ENCODE measurements at regions of chr12 and their contacts with region 1.

Region 1: DNA sequence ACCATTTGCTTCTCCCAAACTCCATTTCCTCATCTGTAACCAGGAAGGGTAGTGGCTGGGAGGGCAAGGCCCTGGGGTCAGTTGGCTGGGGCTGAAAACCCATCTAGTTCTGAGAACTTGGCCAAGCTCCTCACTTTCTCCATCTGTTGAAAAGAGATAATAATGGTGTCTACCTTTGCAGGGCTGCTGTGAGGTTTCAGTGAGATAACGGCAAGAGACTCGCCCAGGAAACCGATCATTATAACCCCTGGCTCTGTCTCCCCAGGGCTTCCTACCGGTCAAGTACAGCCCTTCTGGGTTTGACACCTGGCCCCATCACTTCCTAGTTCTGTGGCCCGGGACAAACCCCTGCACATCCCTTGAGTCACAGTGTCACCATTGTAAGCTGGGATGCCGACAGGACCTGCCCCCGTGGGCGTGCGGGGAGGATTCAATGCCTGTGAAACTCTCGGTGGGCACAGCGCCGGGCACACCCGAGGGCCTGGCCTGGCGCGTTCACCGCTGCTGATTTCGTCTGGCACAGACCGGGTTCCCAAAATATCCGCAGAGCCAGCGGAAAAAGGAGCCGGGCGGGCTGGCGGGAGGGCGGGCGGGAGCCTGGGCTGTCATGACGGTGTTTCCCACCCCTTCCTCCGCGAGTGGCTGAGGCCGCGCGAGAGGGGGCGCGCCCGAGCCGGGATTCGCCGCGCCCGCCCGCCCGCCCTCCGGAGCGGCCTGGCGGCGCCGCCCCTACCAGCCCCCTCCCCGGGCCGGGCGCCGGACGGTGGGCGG is 4.4 kb downstream of the KMT5A start:
- DNase-seq: peak; percentile 41 to 88 (median 72)
- ATAC-seq: peak; percentile 66
- H3K4me3 ChIP-seq: peak overlapping the region; percentile 42 to 64
- H3K4me3 Mint-ChIP-seq: peak overlapping the region; percentile 88
- H3K27ac ChIP-seq: peak overlapping the region; percentile 33 to 79
- H3K27ac Mint-ChIP-seq: peak overlapping the region; percentile 91
- H3K4me1 ChIP-seq: peaks cover 22% of the 10 kb centered on the region
- H3K4me1 Mint-ChIP-seq: peaks cover 32% of the 10 kb centered on the region
- H3K27me3 ChIP-seq: no peaks in the 10 kb centered on the region
- H3K27me3 Mint-ChIP-seq: no peaks in the 10 kb centered on the region
- CTCF ChIP-seq: no peak

Region 2: GRCh38 chr12:122888232-122888867 is 500.0 kb before region 1 on chr12:
- CTCF ChIA-PET with region 1: no interaction called
- POLR2A ChIA-PET with region 1: no interaction called
- intact Hi-C with region 1: loop called in 1 of 2 experiments (anchors 5 kb)
- DNase-seq: peak in 6 of 9 experiments; percentile 42 to 89 (median 71)
- ATAC-seq: peak; percentile 88
- H3K4me3 ChIP-seq: peak overlapping the region in 1 of 2 experiments; percentile 26
- H3K4me3 Mint-ChIP-seq: peak overlapping the region; percentile 77
- H3K27ac ChIP-seq: peak overlapping the region; percentile 17 to 63
- H3K27ac Mint-ChIP-seq: peak overlapping the region; percentile 93
- H3K4me1 ChIP-seq: peaks cover 74% of the 10 kb centered on the region
- H3K4me1 Mint-ChIP-seq: peaks cover 87% of the 10 kb centered on the region
- H3K27me3 ChIP-seq: no peaks in the 10 kb centered on the region
- H3K27me3 Mint-ChIP-seq: no peaks in the 10 kb centered on the region
- CTCF ChIP-seq: no peak

Region 3: DNA sequence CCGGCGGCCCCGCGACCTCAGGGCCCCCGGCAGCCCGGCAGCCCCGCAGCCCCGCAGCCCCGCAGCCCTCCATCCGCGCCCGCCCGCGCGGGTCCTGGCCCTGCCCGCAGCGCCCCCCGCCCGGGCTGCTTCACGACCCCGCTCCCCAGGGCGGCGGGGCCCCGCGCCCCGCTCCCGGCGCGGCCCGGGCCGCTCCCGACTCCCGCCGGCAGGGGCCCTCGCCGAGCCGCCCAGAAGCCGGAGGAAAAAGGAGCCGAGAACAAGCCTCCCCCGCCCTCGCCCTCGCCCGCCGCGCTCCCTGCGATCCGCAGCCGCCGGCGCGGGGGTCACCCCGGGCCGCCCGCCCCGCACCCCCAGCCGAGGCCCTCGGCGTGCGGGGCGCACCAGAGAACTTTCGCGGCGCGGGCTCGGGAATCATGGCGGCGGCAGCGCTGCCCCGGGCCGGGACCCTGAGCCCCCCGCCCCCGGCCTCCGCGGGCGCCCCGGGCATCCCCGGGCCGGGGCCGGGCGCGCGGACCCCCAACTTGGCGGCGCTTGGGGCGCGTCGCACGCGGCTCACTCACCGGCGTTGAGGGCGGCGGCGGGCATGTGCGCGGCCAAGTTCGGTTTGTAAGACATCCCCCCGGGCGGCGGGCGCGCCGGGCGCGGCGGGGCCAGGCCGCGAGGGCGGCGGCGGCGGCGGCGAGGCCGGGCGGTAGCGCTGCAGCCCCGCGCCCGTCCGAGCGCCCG is 117.2 kb before region 1 on chr12:
- CTCF ChIA-PET with region 1: no interaction called
- POLR2A ChIA-PET with region 1: no interaction called
- intact Hi-C with region 1: loop called in 1 of 2 experiments (anchors 2 kb)
- DNase-seq: peak; percentile 48 to 83 (median 74)
- ATAC-seq: peak; percentile 86
- H3K4me3 ChIP-seq: peak overlapping the region in 1 of 2 experiments; percentile 49
- H3K4me3 Mint-ChIP-seq: no peak overlapping the region
- H3K27ac ChIP-seq: no peak overlapping the region
- H3K27ac Mint-ChIP-seq: no peak overlapping the region
- H3K4me1 ChIP-seq: peaks cover 26% of the 10 kb centered on the region
- H3K4me1 Mint-ChIP-seq: peaks cover 32% of the 10 kb centered on the region
- H3K27me3 ChIP-seq: no peaks in the 10 kb centered on the region
- H3K27me3 Mint-ChIP-seq: no peaks in the 10 kb centered on the region
- CTCF ChIP-seq: no peak

Region 4: DNA sequence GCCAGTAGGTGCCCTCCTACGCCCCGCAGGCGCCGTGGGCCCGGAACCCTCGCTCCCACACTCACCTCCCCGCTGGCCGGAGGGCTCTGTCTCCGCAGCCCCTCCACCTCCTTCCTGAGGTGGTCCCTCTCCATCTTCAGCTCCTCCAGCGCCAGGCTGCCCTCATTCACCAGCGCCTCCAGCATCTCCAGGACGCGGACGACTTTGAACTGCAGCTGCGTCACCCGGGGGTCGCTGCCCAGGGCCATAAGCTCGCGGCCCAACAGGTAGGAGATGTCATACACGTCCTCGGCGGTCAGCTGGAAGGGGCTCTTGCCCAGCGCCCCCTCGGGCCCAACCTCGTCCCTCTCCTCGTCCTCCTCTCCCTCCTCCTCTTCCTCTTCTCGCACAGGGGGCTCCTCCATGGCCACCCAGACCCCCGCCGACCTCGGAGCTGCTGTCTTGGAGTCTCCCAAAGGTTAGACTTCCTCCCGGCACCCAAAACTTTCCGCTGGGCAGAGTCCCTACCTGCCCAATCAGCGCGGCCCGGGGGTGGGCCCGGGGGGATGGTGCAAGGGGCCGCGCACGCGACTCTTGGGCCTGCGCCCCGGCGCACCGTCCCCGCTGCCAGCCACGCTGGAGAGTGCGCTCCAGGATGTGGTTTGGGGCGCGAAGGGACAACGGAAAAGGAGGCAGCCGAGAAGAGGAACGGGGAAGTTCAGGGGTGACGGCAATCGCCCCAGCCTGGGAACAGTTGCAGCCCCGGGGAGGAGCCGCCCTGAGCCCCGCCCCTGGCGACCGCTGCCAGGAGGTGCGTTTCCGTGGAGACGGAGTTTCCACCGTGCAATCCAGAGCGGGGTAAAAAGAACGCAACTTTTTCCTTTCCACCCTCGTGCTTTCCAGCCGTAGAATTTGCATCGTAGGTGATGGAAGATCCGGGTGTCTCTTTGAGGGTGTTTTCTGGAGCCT is 47.9 kb after region 1 on chr12 and contains the start of gene RILPL2:
- CTCF ChIA-PET with region 1: no interaction called
- POLR2A ChIA-PET with region 1: interaction called, 8 read pairs
- intact Hi-C with region 1: loop called (anchors 2 to 5 kb)
- DNase-seq: peak; percentile 77 to 95 (median 90)
- ATAC-seq: peak; percentile 89
- H3K4me3 ChIP-seq: peak within 1 kb of the TSS; percentile 84 to 97
- H3K4me3 Mint-ChIP-seq: peak within 1 kb of the TSS; percentile 93
- H3K27ac ChIP-seq: peak within 1 kb of the TSS; percentile 60 to 93
- H3K27ac Mint-ChIP-seq: peak within 1 kb of the TSS; percentile 90
- H3K4me1 ChIP-seq: peaks cover 35% of the 10 kb centered on the region
- H3K4me1 Mint-ChIP-seq: peaks cover 38% of the 10 kb centered on the region
- H3K27me3 ChIP-seq: no peaks in the 10 kb centered on the region
- H3K27me3 Mint-ChIP-seq: no peaks in the 10 kb centered on the region
- CTCF ChIP-seq: no peak
- total RNA-seq, gene RILPL2: 3.4 to 3.6 TPM

Region 5: DNA sequence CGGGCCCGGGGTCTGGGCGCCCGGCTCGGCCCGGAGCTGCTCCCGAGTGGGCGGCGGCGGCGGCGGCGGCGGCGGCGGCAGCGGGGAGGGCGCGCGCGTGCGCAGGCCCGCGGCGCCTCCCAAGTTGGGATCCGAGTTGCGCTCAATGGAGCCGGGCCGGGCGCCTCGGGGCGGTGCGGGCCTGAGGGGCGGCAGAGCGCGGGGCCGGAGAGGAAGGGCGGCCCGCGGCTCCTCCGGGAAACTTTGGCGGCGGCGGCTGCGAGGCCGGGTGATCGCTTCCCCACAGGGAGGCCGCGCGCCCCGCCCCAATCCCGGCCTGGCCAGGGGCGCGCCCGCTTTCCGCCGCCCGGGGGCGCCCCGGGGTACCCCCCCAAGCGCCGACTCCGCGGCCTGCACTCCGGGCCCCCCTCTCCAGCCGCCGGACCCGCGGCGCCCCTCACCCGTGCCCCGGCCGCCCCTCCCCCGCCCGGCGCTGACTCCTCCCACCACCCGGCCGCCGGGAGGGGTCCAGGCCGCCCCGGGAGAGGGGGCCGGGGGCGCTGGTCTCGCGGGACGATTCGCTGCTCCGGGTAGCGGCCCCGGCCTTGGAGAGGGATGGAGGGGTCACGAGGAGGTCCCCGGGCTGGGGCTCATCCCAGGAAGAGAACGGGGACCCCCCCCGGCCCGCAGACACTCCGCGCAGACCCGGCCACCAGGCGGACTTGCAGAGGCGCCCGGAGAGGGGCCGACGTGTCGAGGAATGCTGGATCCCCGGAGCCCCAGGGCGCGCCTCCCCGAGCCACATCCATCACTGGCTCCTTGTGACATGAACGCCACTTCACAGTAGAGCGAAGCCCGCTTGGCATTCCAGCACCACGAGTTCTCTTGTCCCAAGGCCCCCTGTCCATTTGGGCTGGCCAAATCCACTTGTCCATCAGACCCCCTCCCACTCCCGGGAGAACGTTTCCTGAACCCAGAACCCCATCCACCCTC is 145.6 kb after region 1 on chr12 and contains the start of gene RILPL1:
- CTCF ChIA-PET with region 1: no interaction called
- POLR2A ChIA-PET with region 1: no interaction called
- intact Hi-C with region 1: loop called in 1 of 2 experiments (anchors 2 kb)
- DNase-seq: peak; percentile 7 to 71 (median 43)
- ATAC-seq: peak; percentile 82
- H3K4me3 ChIP-seq: peak within 1 kb of the TSS; percentile 61 to 68
- H3K4me3 Mint-ChIP-seq: peak within 1 kb of the TSS; percentile 89
- H3K27ac ChIP-seq: no peak within 1 kb of the TSS
- H3K27ac Mint-ChIP-seq: peak within 1 kb of the TSS; percentile 74
- H3K4me1 ChIP-seq: peaks cover 19% of the 10 kb centered on the region
- H3K4me1 Mint-ChIP-seq: peaks cover 17% of the 10 kb centered on the region
- H3K27me3 ChIP-seq: no peaks in the 10 kb centered on the region
- H3K27me3 Mint-ChIP-seq: no peaks in the 10 kb centered on the region
- CTCF ChIP-seq: peak; percentile 27
- total RNA-seq, gene RILPL1: 3.1 to 3.4 TPM

Region 6: GRCh38 chr12:123601602-123602489 is 213.5 kb after region 1 on chr12 and contains the start of gene DDX55:
- CTCF ChIA-PET with region 1: interaction called, 3 read pairs
- POLR2A ChIA-PET with region 1: interaction called, 5 read pairs
- intact Hi-C with region 1: loop called in 1 of 2 experiments (anchors 5 kb)
- DNase-seq: peak; percentile 71 to 94 (median 87)
- ATAC-seq: peak; percentile 93
- H3K4me3 ChIP-seq: peak within 1 kb of the TSS; percentile 92 to 94
- H3K4me3 Mint-ChIP-seq: peak within 1 kb of the TSS; percentile 98
- H3K27ac ChIP-seq: peak within 1 kb of the TSS; percentile 78 to 89
- H3K27ac Mint-ChIP-seq: peak within 1 kb of the TSS; percentile 94
- H3K4me1 ChIP-seq: peaks cover 16% of the 10 kb centered on the region
- H3K4me1 Mint-ChIP-seq: peaks cover 31% of the 10 kb centered on the region
- H3K27me3 ChIP-seq: no peaks in the 10 kb centered on the region
- H3K27me3 Mint-ChIP-seq: no peaks in the 10 kb centered on the region
- CTCF ChIP-seq: peak; percentile 42
- total RNA-seq, gene DDX55: 41.1 to 44.5 TPM

Measured in CD8-positive, alpha-beta T cell (primary cell).